ENCODE measurements at regions of chr1 and their contacts with region 1.

Region 1: DNA sequence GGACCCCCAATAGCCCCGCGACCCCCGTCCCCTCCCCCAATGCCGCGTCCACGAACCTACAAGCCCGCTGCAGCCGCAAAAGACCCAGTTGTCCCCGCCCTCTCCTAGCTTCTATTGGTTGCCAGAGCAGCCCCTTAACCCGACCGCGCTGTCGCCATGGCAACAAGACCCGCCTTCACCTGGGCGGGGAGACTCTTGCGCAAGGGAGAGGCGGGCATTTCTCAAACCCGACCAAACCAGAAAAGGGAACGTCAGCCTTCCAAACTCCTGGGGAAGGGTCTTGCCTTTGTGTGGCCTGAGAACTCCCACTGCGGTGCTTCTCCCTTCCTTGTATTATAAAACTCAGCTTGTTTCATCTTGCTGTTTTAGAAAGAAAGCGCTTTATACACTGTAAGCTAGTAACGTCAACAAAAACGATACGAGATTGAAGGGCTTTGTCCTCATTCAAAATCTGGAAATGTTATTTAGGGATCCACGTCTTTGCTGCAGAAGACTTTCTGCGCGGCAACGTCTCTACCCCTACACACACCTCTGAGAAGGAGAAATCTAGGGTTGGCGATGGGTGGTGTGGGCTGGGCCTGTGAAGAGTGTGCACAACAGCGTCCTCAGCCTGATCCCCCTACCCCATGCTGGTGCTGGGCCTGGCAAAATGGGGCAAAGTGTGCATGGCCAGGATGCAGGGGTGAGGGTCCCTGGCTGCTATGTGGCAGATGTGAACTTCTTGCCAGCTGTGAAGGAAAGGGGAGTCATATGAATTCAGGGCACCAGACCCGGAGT is at the start of gene TMEM9:
- DNase-seq: peak; percentile 99 to 100 (median 99)
- ATAC-seq: peak; percentile 93
- H3K4me3 ChIP-seq: peak within 1 kb of the TSS; percentile 66
- H3K27ac ChIP-seq: peak within 1 kb of the TSS; percentile 93
- H3K4me1 ChIP-seq: peaks cover 13 to 27% of the 10 kb centered on the region in 2 experiments
- H3K27me3 ChIP-seq: no peaks in the 10 kb centered on the region
- CTCF ChIP-seq: no peak
- EP300 ChIP-seq: no peak
- POLR2A ChIP-seq: peak; percentile 68
- RAD21 ChIP-seq: no peak
- polyA plus RNA-seq, gene TMEM9: 42.4 to 86.2 TPM

Region 2: GRCh38 chr1:201059871-201060555 is 94.6 kb before region 1 on chr1:
- CTCF ChIA-PET with region 1: no interaction called
- POLR2A ChIA-PET with region 1: no interaction called
- in situ Hi-C with region 1: no loop called
- intact Hi-C with region 1: no loop called
- DNase-seq: peak in 2 of 4 experiments; percentile 36 to 37
- ATAC-seq: no peak
- H3K4me3 ChIP-seq: no peak overlapping the region
- H3K27ac ChIP-seq: no peak overlapping the region
- H3K4me1 ChIP-seq: peaks cover 0 to 5% of the 10 kb centered on the region in 2 experiments; a peak in 3 of 5 replicates
- H3K27me3 ChIP-seq: peaks cover 29 to 83% of the 10 kb centered on the region in 2 experiments
- CTCF ChIP-seq: no peak
- EP300 ChIP-seq: no peak
- POLR2A ChIP-seq: no peak
- RAD21 ChIP-seq: no peak

Region 3: DNA sequence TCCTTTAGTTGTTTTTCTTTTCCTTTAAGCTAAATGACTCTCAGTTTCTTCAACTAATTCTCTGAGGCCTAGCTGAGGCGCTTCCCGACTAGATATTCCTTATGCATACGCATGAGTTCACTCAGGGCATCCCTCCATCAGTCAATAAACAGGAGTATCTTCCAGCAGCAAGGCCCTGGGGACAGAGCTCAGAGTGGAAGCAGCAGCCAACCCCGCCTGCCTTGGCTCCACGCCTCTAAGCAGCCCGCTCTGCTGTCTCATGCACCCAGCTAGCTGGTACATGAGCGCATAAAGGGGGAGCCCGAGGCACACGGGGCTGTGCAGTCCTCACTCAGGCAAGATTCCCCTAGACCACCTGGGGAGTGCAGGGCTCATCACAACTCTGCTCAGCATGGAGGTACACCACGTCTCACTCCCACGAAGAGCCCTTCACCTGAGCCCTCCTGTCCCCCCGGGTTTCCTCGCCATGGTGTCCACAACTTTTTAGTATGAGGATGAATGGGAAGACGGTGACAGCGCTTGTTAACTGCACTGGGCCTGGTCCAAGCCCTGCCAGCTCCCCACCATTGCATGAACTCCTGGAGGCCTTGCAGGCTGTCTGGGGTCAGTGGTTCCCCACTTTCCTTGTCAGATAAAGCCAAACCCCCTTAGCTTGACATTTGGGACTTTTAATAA is 11.9 kb before region 1 on chr1:
- CTCF ChIA-PET with region 1: no interaction called
- POLR2A ChIA-PET with region 1: interaction called, 14 read pairs
- in situ Hi-C with region 1: no loop called
- intact Hi-C with region 1: no loop called
- DNase-seq: no peak
- ATAC-seq: no peak
- H3K4me3 ChIP-seq: no peak overlapping the region
- H3K27ac ChIP-seq: no peak overlapping the region
- H3K4me1 ChIP-seq: no peaks in the 10 kb centered on the region
- H3K27me3 ChIP-seq: no peaks in the 10 kb centered on the region
- CTCF ChIP-seq: no peak
- EP300 ChIP-seq: no peak
- POLR2A ChIP-seq: no peak
- RAD21 ChIP-seq: no peak

Region 4: DNA sequence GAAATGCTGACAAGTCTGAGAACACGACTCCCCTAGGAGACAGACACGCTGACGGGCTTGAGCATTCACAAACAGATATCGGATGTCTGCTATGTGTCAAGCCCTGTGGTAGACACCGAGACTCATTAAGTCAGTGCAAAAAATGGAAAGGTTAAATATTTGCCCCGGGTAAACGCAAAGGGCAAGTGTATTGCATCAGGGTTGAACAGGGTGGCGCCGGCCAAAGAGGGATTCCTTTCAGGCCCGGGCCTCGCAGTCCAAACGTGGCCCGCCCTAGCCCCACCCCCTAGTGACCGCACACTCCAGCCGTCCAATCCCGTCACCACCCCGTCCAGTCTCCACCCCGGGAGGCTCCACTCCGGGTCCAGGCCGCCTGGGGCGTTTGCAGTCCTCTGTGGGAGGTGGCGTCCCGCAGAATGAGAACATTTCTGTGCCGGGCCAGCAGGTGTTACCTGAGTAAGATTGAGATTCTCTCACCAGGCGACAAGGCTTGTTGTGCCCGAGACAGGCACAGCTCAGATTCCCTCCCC is 16.0 kb after region 1 on chr1:
- CTCF ChIA-PET with region 1: no interaction called
- POLR2A ChIA-PET with region 1: interaction called, 121 read pairs
- in situ Hi-C with region 1: no loop called
- intact Hi-C with region 1: loop called (anchors 1 kb)
- DNase-seq: peak; percentile 97 to 100 (median 100)
- ATAC-seq: peak; percentile 98
- H3K4me3 ChIP-seq: peak overlapping the region; percentile 53
- H3K27ac ChIP-seq: peak overlapping the region; percentile 72
- H3K4me1 ChIP-seq: peaks cover 15 to 32% of the 10 kb centered on the region in 2 experiments; a peak in 4 of 5 replicates
- H3K27me3 ChIP-seq: peaks cover 2% of the 10 kb centered on the region in 2 experiments; a peak in 1 of 5 replicates
- CTCF ChIP-seq: peak in 1 of 3 experiments; percentile 31; a peak in 1 of 6 replicates
- EP300 ChIP-seq: peak; percentile 56
- POLR2A ChIP-seq: peak; percentile 68; the same call in 1 of the 2 replicates
- RAD21 ChIP-seq: 0 out of 4 replicates have a peak, but pooled peaks of 1 of the 2 experiments have one; percentile 6

Measured in K562 (cell line).